HepG2 (cell line): ENCODE measurements at regions of chr7 and their contacts with region 1.

Region 1: GRCh38 chr7:138316421-138317043 is 143.5 kb upstream of the TRIM24 start:
- DNase-seq: peak; percentile 99
- ATAC-seq: peak; percentile 97
- H3K4me3 ChIP-seq: peak overlapping the region in 2 of 3 experiments; percentile 4 to 36; a peak in 2 of 6 replicates
- H3K27ac ChIP-seq: peak overlapping the region; percentile 93
- H3K4me1 ChIP-seq: peaks cover 41% of the 10 kb centered on the region
- H3K27me3 ChIP-seq: no peaks in the 10 kb centered on the region
- CTCF ChIP-seq: no peak
- EP300 ChIP-seq: peak; percentile 64 to 98
- POLR2A ChIP-seq: peak; percentile 49 to 89
- RAD21 ChIP-seq: no peak

Region 2: GRCh38 chr7:138064856-138065357 is 251.6 kb before region 1 on chr7:
- CTCF ChIA-PET with region 1: no interaction called
- POLR2A ChIA-PET with region 1: interaction called, 3 read pairs
- in situ Hi-C with region 1: no loop called
- intact Hi-C with region 1: loop called (anchors 2 kb)
- DNase-seq: peak; percentile 68
- ATAC-seq: peak; percentile 66
- H3K4me3 ChIP-seq: peak overlapping the region; percentile 16 to 57 (median 48)
- H3K27ac ChIP-seq: peak overlapping the region; percentile 80
- H3K4me1 ChIP-seq: peaks cover 95% of the 10 kb centered on the region
- H3K27me3 ChIP-seq: no peaks in the 10 kb centered on the region; a peak in 1 of 5 replicates
- CTCF ChIP-seq: peak; percentile 56
- EP300 ChIP-seq: peak in 1 of 2 experiments; percentile 72; a peak in 2 of 4 replicates
- POLR2A ChIP-seq: no peak
- RAD21 ChIP-seq: no peak

Region 3: GRCh38 chr7:138245682-138246081 is 70.8 kb before region 1 on chr7:
- CTCF ChIA-PET with region 1: no interaction called
- POLR2A ChIA-PET with region 1: interaction called, 14 read pairs
- in situ Hi-C with region 1: no loop called
- intact Hi-C with region 1: no loop called
- DNase-seq: peak; percentile 97
- ATAC-seq: peak; percentile 96
- H3K4me3 ChIP-seq: no peak overlapping the region; a peak in 1 of 6 replicates
- H3K27ac ChIP-seq: peak overlapping the region; percentile 80
- H3K4me1 ChIP-seq: peaks cover 54% of the 10 kb centered on the region
- H3K27me3 ChIP-seq: no peaks in the 10 kb centered on the region
- CTCF ChIP-seq: no peak
- EP300 ChIP-seq: peak; percentile 84 to 96; a peak in 3 of 4 replicates
- POLR2A ChIP-seq: no peak
- RAD21 ChIP-seq: no peak

Region 4: DNA sequence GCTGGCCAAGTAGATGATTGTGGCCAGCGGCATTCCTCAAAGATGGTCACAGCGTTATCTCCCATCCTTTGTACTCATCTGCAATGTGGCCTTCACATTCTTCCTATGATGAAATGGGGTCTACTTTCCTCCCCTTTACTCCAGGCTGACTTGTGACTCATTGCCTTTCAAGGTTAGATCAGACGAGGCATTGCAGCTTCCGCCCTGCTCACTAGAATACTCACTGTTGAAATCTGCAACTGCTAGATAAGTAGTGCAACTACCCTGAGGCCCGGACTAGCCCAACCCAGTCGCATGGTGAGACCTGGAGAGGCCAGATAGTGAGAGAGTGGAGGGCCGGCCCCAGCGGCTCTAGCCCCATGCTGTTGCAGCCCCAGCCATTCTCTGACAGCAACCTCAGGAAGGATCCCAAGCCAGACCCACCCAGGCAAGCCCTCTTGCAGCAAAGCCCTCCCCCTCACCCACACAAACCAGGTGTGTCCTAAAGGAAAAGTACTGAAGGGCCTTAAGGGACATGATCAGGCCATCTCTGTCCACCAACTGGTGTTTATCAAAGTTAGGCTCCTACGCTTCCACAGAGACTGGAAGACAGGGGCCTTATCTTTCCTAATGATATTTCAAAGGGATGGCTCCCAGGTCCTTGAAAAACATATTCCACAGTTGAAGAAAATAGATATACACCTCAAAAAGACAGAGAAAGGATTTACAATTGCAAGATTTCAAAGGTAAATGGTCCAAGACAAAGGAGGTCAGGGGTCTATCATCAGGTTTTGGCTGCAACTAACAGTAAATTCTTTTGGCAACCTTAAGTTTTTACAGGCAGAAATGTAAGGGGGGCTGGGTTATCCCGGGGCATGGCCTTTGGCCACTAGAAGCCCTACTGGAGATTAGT is 36.3 kb after region 1 on chr7:
- CTCF ChIA-PET with region 1: no interaction called
- POLR2A ChIA-PET with region 1: interaction called, 18 read pairs
- in situ Hi-C with region 1: no loop called
- intact Hi-C with region 1: loop called (anchors 2 kb)
- DNase-seq: peak; percentile 100
- ATAC-seq: peak; percentile 99
- H3K4me3 ChIP-seq: peak overlapping the region; percentile 43 to 52 (median 46)
- H3K27ac ChIP-seq: peak overlapping the region; percentile 99
- H3K4me1 ChIP-seq: peaks cover 29% of the 10 kb centered on the region
- H3K27me3 ChIP-seq: no peaks in the 10 kb centered on the region
- CTCF ChIP-seq: no peak; the same call in 1 of the 2 replicates
- EP300 ChIP-seq: peak; percentile 83 to 99; a peak in 3 of 4 replicates
- POLR2A ChIP-seq: peak; percentile 68 to 86
- RAD21 ChIP-seq: peak; percentile 62

Region 5: DNA sequence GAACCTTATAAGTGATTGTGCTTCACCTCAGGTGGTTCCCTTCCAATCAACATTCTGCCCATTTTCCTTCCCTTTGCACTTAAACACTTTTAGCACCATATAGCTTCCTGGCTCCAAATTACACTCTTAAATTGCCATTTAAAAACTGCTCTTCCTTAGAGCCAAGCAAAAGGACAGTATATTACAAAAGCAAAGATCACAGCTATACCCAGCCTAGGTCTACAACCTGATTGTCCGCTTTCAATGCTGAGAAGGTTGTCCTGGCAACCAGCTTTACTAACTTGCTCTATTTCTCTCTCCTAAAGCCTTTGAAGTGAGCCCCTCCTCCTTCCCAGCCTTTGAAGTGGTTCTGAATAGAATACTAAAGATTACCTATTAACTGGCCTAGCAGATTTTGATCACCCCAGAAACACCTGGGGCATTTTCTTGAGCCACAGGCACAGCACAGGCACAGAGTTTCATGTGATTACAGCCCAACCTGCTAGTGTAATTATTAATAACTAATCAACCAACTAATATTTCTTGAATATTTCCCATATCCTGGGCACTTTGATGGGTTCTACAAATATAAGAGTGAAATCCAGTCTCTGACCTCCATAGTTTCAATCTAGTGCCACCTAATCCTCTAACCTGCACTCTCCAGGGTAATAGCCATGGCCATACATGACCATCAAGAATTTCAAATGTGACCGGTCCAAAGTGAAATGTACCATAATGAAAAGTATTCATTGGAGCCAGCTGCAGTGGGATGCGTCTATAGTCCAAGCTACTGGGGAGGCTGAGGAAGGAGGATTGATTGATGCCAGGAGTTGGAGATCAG is 79.9 kb after region 1 on chr7:
- CTCF ChIA-PET with region 1: no interaction called
- POLR2A ChIA-PET with region 1: interaction called, 12 read pairs
- in situ Hi-C with region 1: no loop called
- intact Hi-C with region 1: no loop called
- DNase-seq: peak; percentile 100
- ATAC-seq: peak; percentile 99
- H3K4me3 ChIP-seq: peak overlapping the region in 2 of 3 experiments; percentile 4 to 38; a peak in 1 of 6 replicates
- H3K27ac ChIP-seq: peak overlapping the region; percentile 100
- H3K4me1 ChIP-seq: peaks cover 82% of the 10 kb centered on the region
- H3K27me3 ChIP-seq: no peaks in the 10 kb centered on the region
- CTCF ChIP-seq: no peak
- EP300 ChIP-seq: peak; percentile 79 to 99; a peak in 3 of 4 replicates
- POLR2A ChIP-seq: peak; percentile 34 to 39
- RAD21 ChIP-seq: peak; percentile 32; the same call in 1 of the 2 replicates